ENCODE measurements at regions of chr4 and their contacts with region 1.

Region 1: GRCh38 chr4:73648478-73648877 is 28.2 kb upstream of the RASSF6 start:
- DNase-seq: no peak
- H3K4me3 ChIP-seq: no peak overlapping the region
- H3K27ac ChIP-seq: no peak overlapping the region
- H3K4me1 ChIP-seq: no peaks in the 10 kb centered on the region
- H3K27me3 ChIP-seq: no peaks in the 10 kb centered on the region
- CTCF ChIP-seq: no peak
- EP300 ChIP-seq: no peak
- POLR2A ChIP-seq: no peak

Region 2: GRCh38 chr4:73573794-73574406 is 74.6 kb before region 1 on chr4:
- intact Hi-C with region 1: loop called in 3 of 4 experiments (anchors 5 to 10 kb)
- DNase-seq: peak; percentile 54 to 66 (median 62)
- H3K4me3 ChIP-seq: no peak overlapping the region
- H3K27ac ChIP-seq: no peak overlapping the region
- H3K4me1 ChIP-seq: no peaks in the 10 kb centered on the region
- H3K27me3 ChIP-seq: no peaks in the 10 kb centered on the region
- CTCF ChIP-seq: peak in 2 of 3 donors; percentile 41 to 51
- EP300 ChIP-seq: no peak
- POLR2A ChIP-seq: no peak

Region 3: GRCh38 chr4:73698217-73698616 is 49.7 kb after region 1 on chr4:
- intact Hi-C with region 1: no loop called
- DNase-seq: no peak
- H3K4me3 ChIP-seq: no peak overlapping the region
- H3K27ac ChIP-seq: no peak overlapping the region
- H3K4me1 ChIP-seq: no peaks in the 10 kb centered on the region
- H3K27me3 ChIP-seq: no peaks in the 10 kb centered on the region
- CTCF ChIP-seq: no peak
- EP300 ChIP-seq: no peak
- POLR2A ChIP-seq: no peak

Measured in ovary (tissue), 10 donors.